Activated CD8-positive, alpha-beta T cell treated with anti-CD3 and anti-CD28 coated beads for 36 hours (primary cell): ENCODE measurements at regions of chr3 and their contacts with region 1.

Region 1: DNA sequence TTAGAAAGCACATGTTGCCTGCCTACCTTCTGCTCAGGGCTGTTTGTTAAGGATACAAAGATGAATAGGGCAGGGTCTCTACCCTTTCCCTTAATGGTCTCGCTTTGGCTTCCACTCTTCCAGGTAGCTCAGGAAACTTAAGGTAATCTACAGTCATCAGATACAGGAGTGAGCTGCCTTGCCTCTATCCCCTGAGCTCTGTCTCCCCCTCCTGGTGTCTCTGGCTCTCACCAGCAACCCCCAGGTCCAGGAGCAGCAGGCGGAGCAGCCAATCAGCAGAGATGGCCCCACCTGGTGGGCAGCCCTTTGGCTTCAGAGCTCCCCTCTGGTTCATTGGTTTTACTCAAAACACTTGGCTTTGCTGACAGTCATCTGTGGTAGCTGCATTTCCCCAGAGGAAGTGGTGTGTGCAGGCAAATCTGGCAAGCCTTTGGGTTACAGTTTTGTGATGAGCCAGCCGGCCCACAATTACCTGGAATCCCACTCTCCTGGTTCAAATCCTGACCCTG is 8.5 kb upstream of the CX3CR1 start:
- DNase-seq: peak; percentile 92
- ATAC-seq: peak; percentile 98
- H3K4me3 Mint-ChIP-seq: no peak overlapping the region
- H3K27ac Mint-ChIP-seq: peak overlapping the region; percentile 4
- H3K4me1 Mint-ChIP-seq: peaks cover 30% of the 10 kb centered on the region
- H3K27me3 Mint-ChIP-seq: no peaks in the 10 kb centered on the region
- CTCF ChIP-seq: peak; percentile 92

Region 2: DNA sequence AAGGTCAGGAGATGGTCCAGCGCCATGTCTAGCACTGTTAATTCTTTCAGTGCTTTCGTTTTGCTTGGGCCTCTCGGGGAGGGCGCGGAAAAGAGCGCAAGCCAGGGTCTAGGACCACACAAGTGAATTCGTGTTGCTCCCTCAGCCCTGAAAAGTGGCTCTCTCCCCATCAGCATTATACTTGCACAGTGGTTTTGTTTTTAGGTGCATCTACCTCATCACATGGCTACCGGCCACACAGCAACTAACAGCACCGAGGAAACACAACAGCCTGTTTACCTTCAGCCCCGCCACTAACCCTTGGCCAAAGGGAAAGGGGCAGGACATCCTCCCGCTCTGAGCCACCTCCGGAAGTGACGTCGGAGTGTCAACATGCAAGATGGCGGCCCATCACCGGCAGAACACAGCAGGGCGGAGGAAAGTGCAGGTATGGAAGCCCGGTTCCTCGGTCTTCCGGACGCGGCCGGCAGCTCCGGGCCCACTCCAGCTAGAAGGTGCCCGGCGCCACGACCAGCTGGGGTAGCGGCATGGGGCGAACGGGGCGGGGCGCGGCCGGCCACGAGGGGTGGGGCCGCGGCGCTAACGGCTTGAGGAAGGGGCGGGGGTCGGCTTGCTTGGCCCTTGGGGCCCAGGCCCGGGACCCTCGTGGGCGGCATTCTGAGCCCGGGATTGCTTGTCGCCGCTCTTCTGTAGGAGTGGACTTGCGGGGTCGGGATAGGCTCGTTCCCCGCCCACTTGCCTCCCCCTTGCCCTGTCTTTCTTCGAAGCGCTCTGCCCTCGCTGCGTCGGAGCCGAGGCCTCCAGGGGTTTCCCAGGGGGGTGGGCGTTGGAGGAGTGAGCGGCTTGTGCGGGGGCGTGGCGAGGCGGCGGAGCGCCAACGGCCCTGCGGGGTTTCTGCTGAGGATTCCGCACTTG is 236.4 kb before region 1 on chr3 and contains the starts of genes SCN11A and WDR48:
- CTCF ChIA-PET with region 1: no interaction called
- POLR2A ChIA-PET with region 1: no interaction called
- intact Hi-C with region 1: no loop called
- DNase-seq: peak; percentile 97
- ATAC-seq: peak; percentile 97
- H3K4me3 Mint-ChIP-seq: peak within 1 kb of the TSS; percentile 87
- H3K27ac Mint-ChIP-seq: peak within 1 kb of the TSS; percentile 99
- H3K4me1 Mint-ChIP-seq: peaks cover 51% of the 10 kb centered on the region
- H3K27me3 Mint-ChIP-seq: no peaks in the 10 kb centered on the region
- CTCF ChIP-seq: no peak
- total RNA-seq, gene SCN11A: not detected
- total RNA-seq, gene WDR48: 33.2 to 34.7 TPM

Region 3: DNA sequence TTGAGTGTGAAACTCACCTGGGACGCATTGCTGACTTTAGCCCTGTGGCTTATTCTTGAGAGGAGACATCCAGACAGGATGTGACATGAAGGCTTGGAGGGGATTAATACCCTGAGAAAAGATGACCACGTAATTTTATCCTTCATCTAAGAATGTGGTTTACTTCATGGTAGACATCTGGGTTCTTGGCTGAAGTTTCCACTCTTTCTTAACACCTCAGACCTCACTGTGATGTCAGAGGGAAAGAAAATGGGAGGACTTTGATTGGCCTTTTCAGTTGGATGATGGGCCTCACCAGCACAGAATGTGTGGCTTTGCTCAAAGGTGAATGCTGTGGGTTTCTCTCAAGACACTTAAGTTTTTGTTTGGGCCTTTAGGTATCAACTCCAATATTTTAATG is 197.4 kb before region 1 on chr3:
- CTCF ChIA-PET with region 1: interaction called, 16 read pairs
- POLR2A ChIA-PET with region 1: interaction called, 3 read pairs
- intact Hi-C with region 1: no loop called
- DNase-seq: peak; percentile 36
- ATAC-seq: peak; percentile 85
- H3K4me3 Mint-ChIP-seq: no peak overlapping the region
- H3K27ac Mint-ChIP-seq: peak overlapping the region; percentile 4
- H3K4me1 Mint-ChIP-seq: peaks cover 2% of the 10 kb centered on the region
- H3K27me3 Mint-ChIP-seq: no peaks in the 10 kb centered on the region
- CTCF ChIP-seq: no peak

Region 4: GRCh38 chr3:39126532-39127071 is 161.8 kb before region 1 on chr3:
- CTCF ChIA-PET with region 1: interaction called, 103 read pairs
- POLR2A ChIA-PET with region 1: no interaction called
- intact Hi-C with region 1: loop called (anchors 5 kb)
- DNase-seq: peak; percentile 64
- ATAC-seq: peak; percentile 83
- H3K4me3 Mint-ChIP-seq: no peak overlapping the region
- H3K27ac Mint-ChIP-seq: no peak overlapping the region
- H3K4me1 Mint-ChIP-seq: peaks cover 18% of the 10 kb centered on the region
- H3K27me3 Mint-ChIP-seq: no peaks in the 10 kb centered on the region
- CTCF ChIP-seq: peak; percentile 46

Region 5: GRCh38 chr3:39171860-39172259 is 116.5 kb before region 1 on chr3:
- CTCF ChIA-PET with region 1: interaction called, 36 read pairs
- POLR2A ChIA-PET with region 1: no interaction called
- intact Hi-C with region 1: no loop called
- DNase-seq: no peak
- ATAC-seq: no peak
- H3K4me3 Mint-ChIP-seq: no peak overlapping the region
- H3K27ac Mint-ChIP-seq: no peak overlapping the region
- H3K4me1 Mint-ChIP-seq: peaks cover 22% of the 10 kb centered on the region
- H3K27me3 Mint-ChIP-seq: no peaks in the 10 kb centered on the region
- CTCF ChIP-seq: no peak

Region 6: GRCh38 chr3:39208463-39209055 is 79.8 kb before region 1 on chr3:
- CTCF ChIA-PET with region 1: interaction called, 78 read pairs
- POLR2A ChIA-PET with region 1: no interaction called
- intact Hi-C with region 1: loop called (anchors 5 kb)
- DNase-seq: peak; percentile 59
- ATAC-seq: peak; percentile 74
- H3K4me3 Mint-ChIP-seq: no peak overlapping the region
- H3K27ac Mint-ChIP-seq: no peak overlapping the region
- H3K4me1 Mint-ChIP-seq: peaks cover 5% of the 10 kb centered on the region
- H3K27me3 Mint-ChIP-seq: peaks cover 3% of the 10 kb centered on the region
- CTCF ChIP-seq: peak; percentile 69

Region 7: GRCh38 chr3:39260957-39261356 is 27.4 kb before region 1 on chr3:
- CTCF ChIA-PET with region 1: interaction called, 21 read pairs
- POLR2A ChIA-PET with region 1: no interaction called
- intact Hi-C with region 1: no loop called
- DNase-seq: peak; percentile 76
- ATAC-seq: peak; percentile 89
- H3K4me3 Mint-ChIP-seq: no peak overlapping the region
- H3K27ac Mint-ChIP-seq: no peak overlapping the region
- H3K4me1 Mint-ChIP-seq: peaks cover 75% of the 10 kb centered on the region
- H3K27me3 Mint-ChIP-seq: peaks cover 10% of the 10 kb centered on the region
- CTCF ChIP-seq: peak; percentile 64

Region 8: GRCh38 chr3:39361252-39361927 is 73.0 kb after region 1 on chr3:
- CTCF ChIA-PET with region 1: interaction called, 24 read pairs
- POLR2A ChIA-PET with region 1: no interaction called
- intact Hi-C with region 1: no loop called
- DNase-seq: peak; percentile 74
- ATAC-seq: peak; percentile 95
- H3K4me3 Mint-ChIP-seq: peak overlapping the region; percentile 5
- H3K27ac Mint-ChIP-seq: peak overlapping the region; percentile 77
- H3K4me1 Mint-ChIP-seq: peaks cover 39% of the 10 kb centered on the region
- H3K27me3 Mint-ChIP-seq: no peaks in the 10 kb centered on the region
- CTCF ChIP-seq: no peak

Region 9: GRCh38 chr3:39447637-39448483 is 159.5 kb after region 1 on chr3:
- CTCF ChIA-PET with region 1: no interaction called
- POLR2A ChIA-PET with region 1: no interaction called
- intact Hi-C with region 1: no loop called
- DNase-seq: peak; percentile 73
- ATAC-seq: peak; percentile 74
- H3K4me3 Mint-ChIP-seq: no peak overlapping the region
- H3K27ac Mint-ChIP-seq: no peak overlapping the region
- H3K4me1 Mint-ChIP-seq: no peaks in the 10 kb centered on the region
- H3K27me3 Mint-ChIP-seq: no peaks in the 10 kb centered on the region
- CTCF ChIP-seq: peak; percentile 88